ENCODE measurements at regions of chr6 and their contacts with region 1.

Region 1: GRCh38 chr6:75532515-75532914 is 38.9 kb upstream of the FILIP1 start:
- DNase-seq: no peak
- CTCF ChIP-seq: no peak

Region 2: DNA sequence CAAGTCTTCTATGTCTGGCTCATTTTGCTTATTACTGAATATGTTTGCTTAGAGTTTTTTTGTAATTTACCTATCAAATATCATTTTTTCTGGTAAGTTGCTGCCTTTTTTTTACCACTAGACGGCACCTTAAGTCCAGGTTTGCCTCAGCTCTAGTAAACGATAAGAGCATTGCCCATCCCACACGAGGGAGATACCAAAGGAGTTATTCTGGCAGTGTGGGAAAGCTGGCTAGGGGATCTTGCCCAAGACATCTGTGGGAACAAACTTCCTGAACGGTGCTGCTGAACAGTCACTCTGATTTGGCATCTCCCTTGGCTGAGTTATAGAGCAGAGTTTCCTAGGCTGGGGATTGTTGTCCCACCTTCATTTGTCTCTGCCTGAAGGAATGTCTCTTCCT is 633.1 kb before region 1 on chr6:
- in situ Hi-C with region 1: no loop called
- DNase-seq: no peak
- CTCF ChIP-seq: no peak

Region 3: DNA sequence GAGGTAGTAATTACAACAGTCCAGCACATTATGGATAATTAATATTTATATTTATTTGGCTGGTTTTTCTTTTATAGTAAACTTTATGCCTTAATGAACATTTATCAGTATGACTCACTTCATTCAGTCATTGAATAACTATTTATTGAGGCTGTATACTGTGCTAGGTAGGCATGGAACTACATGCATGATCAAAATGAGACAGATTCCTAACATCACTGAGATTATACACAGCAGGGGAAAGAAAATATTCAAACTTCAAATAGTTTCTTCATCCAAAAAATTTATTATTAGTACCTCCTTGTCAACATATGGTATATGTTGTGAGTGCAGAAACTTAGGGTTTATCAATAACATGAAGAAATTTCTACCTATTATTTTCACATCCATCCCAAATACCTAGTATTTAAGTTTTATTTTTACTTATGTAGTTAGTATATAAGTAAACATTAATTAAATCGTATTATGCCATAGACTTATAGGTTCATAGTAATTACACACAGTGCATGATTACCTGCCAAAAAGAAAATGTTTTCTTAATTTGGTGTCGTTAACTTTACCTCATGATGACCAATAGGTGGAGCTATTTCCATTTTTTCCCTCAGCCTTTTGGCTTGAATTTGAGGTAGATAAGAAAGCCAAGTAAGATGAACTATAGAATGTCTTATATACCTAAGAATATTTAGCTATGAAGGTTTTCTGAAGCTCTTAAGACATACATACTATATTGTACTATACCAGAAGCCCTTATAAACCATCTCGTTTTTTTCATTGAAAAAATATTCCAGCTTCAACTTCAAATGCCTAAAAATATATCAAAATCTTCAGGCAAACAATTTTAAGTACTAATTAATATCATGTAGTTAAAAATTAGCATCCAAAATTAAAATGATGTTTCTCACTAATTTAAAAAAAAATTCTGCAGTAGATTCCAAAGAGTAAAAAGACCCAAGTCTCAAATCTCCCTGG is 235.4 kb before region 1 on chr6:
- in situ Hi-C with region 1: loop called (anchors 10 kb)
- DNase-seq: peak; percentile 38
- CTCF ChIP-seq: peak; percentile 65

Region 4: GRCh38 chr6:75368151-75368779 is 164.2 kb before region 1 on chr6:
- in situ Hi-C with region 1: loop called (anchors 10 kb)
- DNase-seq: no peak
- CTCF ChIP-seq: peak; percentile 34

Region 5: GRCh38 chr6:76330031-76330430 is 797.5 kb after region 1 on chr6:
- in situ Hi-C with region 1: no loop called
- DNase-seq: no peak
- CTCF ChIP-seq: no peak